Spleen (tissue), 13 donors: ENCODE measurements at regions of chr16 and their contacts with region 1.

Region 1: GRCh38 chr16:67260426-67261075 is 11.8 kb downstream of the SLC9A5 start:
- DNase-seq: peak; percentile 53
- H3K4me3 ChIP-seq: no peak overlapping the region
- H3K27ac ChIP-seq: peak overlapping the region in 1 of 8 donors; percentile 4
- H3K4me1 ChIP-seq: peaks cover 0 to 36% (median 11%) of the 10 kb centered on the region in 6 donors
- H3K27me3 ChIP-seq: peaks cover 0 to 7% (median 0%) of the 10 kb centered on the region in 7 donors
- CTCF ChIP-seq: peak in 10 of 11 experiments; percentile 23 to 64 (median 51)
- POLR2A ChIP-seq: no peak

Region 2: GRCh38 chr16:67406111-67406890 is 145.8 kb after region 1 on chr16:
- intact Hi-C with region 1: loop called (anchors 10 kb)
- DNase-seq: no peak
- H3K4me3 ChIP-seq: no peak overlapping the region
- H3K27ac ChIP-seq: peak overlapping the region in 4 of 8 donors; percentile 3 to 36 (median 14)
- H3K4me1 ChIP-seq: peaks cover 0 to 21% (median 9%) of the 10 kb centered on the region in 6 donors
- H3K27me3 ChIP-seq: no peaks in the 10 kb centered on the region
- CTCF ChIP-seq: no peak
- POLR2A ChIP-seq: no peak

Region 3: DNA sequence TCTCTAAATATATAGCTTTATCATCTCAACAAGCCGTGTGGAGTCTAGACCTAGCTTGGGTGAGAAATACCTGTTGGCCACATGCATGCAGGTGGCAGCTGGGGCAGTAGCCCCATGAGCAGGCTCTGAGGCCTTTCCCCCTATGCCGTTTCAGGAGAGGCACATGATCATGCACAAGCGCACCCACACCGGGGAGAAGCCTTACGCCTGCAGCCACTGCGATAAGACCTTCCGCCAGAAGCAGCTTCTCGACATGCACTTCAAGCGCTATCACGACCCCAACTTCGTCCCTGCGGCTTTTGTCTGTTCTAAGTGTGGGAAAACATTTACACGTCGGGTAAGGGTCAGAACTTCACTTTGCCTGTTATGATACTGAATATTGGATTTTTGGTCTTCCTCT is 367.7 kb after region 1 on chr16:
- intact Hi-C with region 1: no loop called
- DNase-seq: no peak
- H3K4me3 ChIP-seq: no peak overlapping the region
- H3K27ac ChIP-seq: no peak overlapping the region
- H3K4me1 ChIP-seq: no peaks in the 10 kb centered on the region
- H3K27me3 ChIP-seq: no peaks in the 10 kb centered on the region
- CTCF ChIP-seq: no peak
- POLR2A ChIP-seq: no peak